ENCODE measurements at regions of chr1 and their contacts with region 1.

Region 1: GRCh38 chr1:203038891-203039608 is 12.8 kb downstream of the PPFIA4 start:
- DNase-seq: no peak
- H3K4me3 ChIP-seq: no peak overlapping the region
- H3K27me3 ChIP-seq: no peaks in the 10 kb centered on the region
- CTCF ChIP-seq: peak; percentile 91

Region 2: DNA sequence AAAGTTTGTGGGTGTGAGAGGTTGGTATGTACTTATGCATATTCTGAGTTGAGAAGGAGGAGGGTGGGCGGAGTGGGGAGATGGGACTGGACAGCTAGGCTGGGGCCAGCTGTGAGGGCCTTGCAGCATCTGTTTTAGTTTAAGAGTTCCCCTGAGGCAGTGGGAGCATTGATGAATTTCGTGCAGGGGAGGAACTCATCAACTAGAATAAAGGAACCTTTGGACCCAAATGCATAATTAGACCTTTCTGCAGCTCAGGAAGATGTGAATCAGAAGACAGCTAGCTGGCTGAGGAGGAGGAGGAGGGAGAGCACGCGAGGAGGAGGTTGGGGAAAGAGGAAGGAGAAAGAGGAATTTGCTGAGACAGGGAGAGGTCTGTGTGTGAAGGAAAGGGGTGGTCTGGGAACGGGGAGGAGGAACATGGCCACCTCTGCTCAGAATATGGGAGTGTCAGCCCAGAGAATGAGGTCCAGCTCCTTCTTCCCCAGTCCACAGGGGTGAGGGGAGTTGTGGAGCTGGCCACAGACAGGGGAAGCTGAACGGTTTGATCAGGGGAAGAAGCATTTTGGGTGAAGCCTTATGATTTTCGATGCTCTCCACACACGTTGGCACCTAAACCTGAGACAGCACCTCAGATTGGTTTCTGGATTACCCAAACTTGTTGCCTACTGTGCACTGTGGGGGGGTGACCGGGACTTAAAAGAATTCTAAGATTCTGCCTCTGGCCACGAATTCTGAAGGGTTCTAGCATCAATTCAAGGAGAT is 19.0 kb after region 1 on chr1:
- CTCF ChIA-PET with region 1: interaction called, 105 read pairs
- POLR2A ChIA-PET with region 1: no interaction called
- DNase-seq: peak; percentile 90
- H3K4me3 ChIP-seq: no peak overlapping the region
- H3K27me3 ChIP-seq: no peaks in the 10 kb centered on the region
- CTCF ChIP-seq: no peak

Region 3: DNA sequence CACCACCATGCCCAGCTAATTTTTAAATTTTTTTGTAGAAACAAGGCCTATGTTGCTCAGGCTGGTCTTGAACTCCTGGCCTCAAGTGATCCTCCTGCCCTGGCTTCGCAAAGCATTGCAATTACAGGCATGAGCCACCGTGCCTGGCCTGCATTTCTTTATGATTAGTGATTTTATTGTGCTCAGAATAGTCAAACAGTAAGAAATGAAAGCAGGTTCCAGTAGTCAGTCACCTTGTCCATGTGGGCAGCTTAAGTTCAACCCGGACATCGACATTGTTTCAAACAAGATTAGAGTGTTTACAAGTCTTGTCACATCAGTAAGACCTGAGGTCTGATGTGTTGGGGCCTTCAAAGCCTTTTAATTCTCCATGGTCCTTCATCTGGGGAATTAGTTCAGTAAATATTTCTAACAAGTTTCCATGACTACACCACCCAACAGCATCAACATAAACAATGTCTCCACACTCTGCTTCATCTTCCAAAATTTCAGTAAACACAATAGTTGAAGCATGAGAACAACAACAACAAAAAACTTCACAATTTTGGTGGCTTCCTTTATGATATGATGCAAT is 73.3 kb after region 1 on chr1:
- CTCF ChIA-PET with region 1: interaction called, 92 read pairs
- POLR2A ChIA-PET with region 1: no interaction called
- DNase-seq: no peak
- H3K4me3 ChIP-seq: no peak overlapping the region
- H3K27me3 ChIP-seq: peaks cover 32% of the 10 kb centered on the region
- CTCF ChIP-seq: no peak

Region 4: DNA sequence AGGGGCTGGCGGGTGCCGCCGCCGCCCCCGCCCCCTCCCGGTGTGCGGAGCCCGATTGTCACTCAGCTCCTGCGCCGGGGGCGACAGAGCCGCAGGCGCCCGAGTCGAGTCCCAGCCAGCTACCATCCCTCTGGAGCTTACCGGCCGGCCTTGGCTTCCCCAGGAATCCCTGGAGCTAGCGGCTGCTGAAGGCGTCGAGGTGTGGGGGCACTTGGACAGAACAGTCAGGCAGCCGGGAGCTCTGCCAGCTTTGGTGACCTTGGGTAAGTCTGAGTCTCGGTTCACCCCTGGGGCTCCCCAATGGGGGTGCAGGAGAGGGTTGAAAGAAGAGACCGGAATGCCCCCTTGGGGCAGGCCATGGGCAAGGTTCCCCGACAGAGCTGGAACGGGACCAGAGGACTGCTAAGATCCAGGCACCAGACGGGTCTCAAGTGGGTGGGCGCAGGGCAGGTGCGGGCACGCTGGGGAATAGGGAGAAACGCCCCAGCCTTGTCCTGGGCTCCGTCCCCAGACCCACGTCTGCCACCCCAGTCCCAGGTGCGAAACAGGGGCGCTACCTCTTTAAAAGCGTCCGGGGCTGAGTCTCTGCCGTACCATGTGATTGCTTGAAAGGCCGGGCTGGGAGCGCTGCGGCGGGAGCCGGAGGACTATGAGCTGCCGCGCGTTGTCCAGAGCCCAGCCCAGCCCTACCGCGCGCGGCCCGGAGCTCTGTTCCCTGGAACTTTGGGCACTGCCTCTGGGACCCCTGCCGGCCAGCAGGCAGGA is 88.8 kb after region 1 on chr1 and contains the start of gene ADORA1:
- CTCF ChIA-PET with region 1: interaction called, 53 read pairs
- POLR2A ChIA-PET with region 1: no interaction called
- DNase-seq: no peak
- H3K4me3 ChIP-seq: peak within 1 kb of the TSS; percentile 41
- H3K27me3 ChIP-seq: peaks cover 8% of the 10 kb centered on the region
- CTCF ChIP-seq: peak; percentile 32
- polyA plus RNA-seq, gene ADORA1: 2.1 and 2.4 TPM in 2 replicates

Region 5: DNA sequence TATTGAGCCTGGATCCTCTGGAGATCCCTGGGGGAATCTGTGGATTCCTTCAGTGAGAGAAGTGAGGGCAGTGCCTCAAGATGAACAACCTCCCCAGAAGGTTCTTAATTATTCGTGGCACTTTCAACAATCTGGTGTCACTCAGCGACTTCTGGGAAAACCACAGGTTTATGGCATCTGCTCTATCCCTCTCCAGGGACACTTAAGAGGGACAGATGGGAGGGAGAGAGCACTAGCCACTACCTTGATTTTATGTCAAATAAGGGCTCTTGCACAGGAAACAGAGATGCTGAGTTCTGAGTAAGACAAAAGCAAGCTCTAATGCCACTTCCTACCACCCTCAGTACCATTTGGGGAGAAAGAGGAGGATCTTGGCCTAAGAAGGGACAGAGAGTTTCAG is 168.7 kb after region 1 on chr1:
- CTCF ChIA-PET with region 1: interaction called, 162 read pairs
- POLR2A ChIA-PET with region 1: no interaction called
- DNase-seq: no peak
- H3K4me3 ChIP-seq: no peak overlapping the region
- H3K27me3 ChIP-seq: no peaks in the 10 kb centered on the region
- CTCF ChIP-seq: no peak